Heart right ventricle (tissue), 16 donors: ENCODE measurements at regions of chr20 and their contacts with region 1.

Region 1: GRCh38 chr20:39588148-39588757 is 626.1 kb downstream of the DHX35 start:
- DNase-seq: no peak
- ATAC-seq: peak in 6 of 8 donors; percentile 44 to 78 (median 64)
- H3K4me3 ChIP-seq: no peak overlapping the region
- H3K27ac ChIP-seq: no peak overlapping the region
- H3K4me1 ChIP-seq: peaks cover 0 to 21% (median 0%) of the 10 kb centered on the region in 9 donors
- H3K27me3 ChIP-seq: peaks cover 0 to 31% (median 0%) of the 10 kb centered on the region in 7 donors
- CTCF ChIP-seq: no peak

Region 2: GRCh38 chr20:39736434-39737327 is 148.4 kb after region 1 on chr20:
- intact Hi-C with region 1: loop called in 1 of 10 experiments (anchors 10 kb)
- DNase-seq: no peak
- ATAC-seq: no peak
- H3K4me3 ChIP-seq: no peak overlapping the region
- H3K27ac ChIP-seq: no peak overlapping the region
- H3K4me1 ChIP-seq: no peaks in the 10 kb centered on the region
- H3K27me3 ChIP-seq: peaks cover 0 to 9% (median 0%) of the 10 kb centered on the region in 7 donors
- CTCF ChIP-seq: no peak

Region 3: GRCh38 chr20:39960522-39961428 is 372.5 kb after region 1 on chr20:
- intact Hi-C with region 1: no loop called
- DNase-seq: peak in 1 of 2 donors; percentile 22
- ATAC-seq: peak; percentile 33 to 85 (median 68)
- H3K4me3 ChIP-seq: no peak overlapping the region
- H3K27ac ChIP-seq: peak overlapping the region in 2 of 10 donors; percentile 14
- H3K4me1 ChIP-seq: peaks cover 0 to 18% (median 11%) of the 10 kb centered on the region in 9 donors
- H3K27me3 ChIP-seq: no peaks in the 10 kb centered on the region
- CTCF ChIP-seq: no peak